Heart left ventricle (tissue), 16 donors: ENCODE measurements at regions of chr2 and their contacts with region 1.

Region 1: GRCh38 chr2:30026087-30027055 is 105.0 kb upstream of the ALK start:
- DNase-seq: peak; percentile 25 to 64 (median 40)
- ATAC-seq: peak; percentile 66 to 82 (median 80)
- H3K4me3 ChIP-seq: no peak overlapping the region
- H3K27ac ChIP-seq: no peak overlapping the region
- H3K4me1 ChIP-seq: no peaks in the 10 kb centered on the region
- H3K27me3 ChIP-seq: peaks cover 0 to 35% (median 7%) of the 10 kb centered on the region in 9 donors
- CTCF ChIP-seq: peak; percentile 32 to 71 (median 64)
- POLR2A ChIP-seq: no peak

Region 2: GRCh38 chr2:29923110-29923721 is 103.2 kb before region 1 on chr2:
- intact Hi-C with region 1: loop called (anchors 1 to 5 kb)
- DNase-seq: peak in 4 of 5 donors; percentile 32 to 62 (median 46)
- ATAC-seq: no peak
- H3K4me3 ChIP-seq: no peak overlapping the region
- H3K27ac ChIP-seq: no peak overlapping the region
- H3K4me1 ChIP-seq: peaks cover 5 to 30% (median 22%) of the 10 kb centered on the region in 12 donors
- H3K27me3 ChIP-seq: peaks cover 0 to 67% (median 24%) of the 10 kb centered on the region in 9 donors
- CTCF ChIP-seq: peak; percentile 85 to 96 (median 92)
- POLR2A ChIP-seq: no peak

Region 3: GRCh38 chr2:30136764-30137444 is 110.5 kb after region 1 on chr2:
- intact Hi-C with region 1: no loop called
- DNase-seq: no peak
- ATAC-seq: no peak
- H3K4me3 ChIP-seq: no peak overlapping the region
- H3K27ac ChIP-seq: no peak overlapping the region
- H3K4me1 ChIP-seq: peaks cover 0 to 4% (median 0%) of the 10 kb centered on the region in 12 donors
- H3K27me3 ChIP-seq: peaks cover 0 to 8% (median 0%) of the 10 kb centered on the region in 9 donors
- CTCF ChIP-seq: no peak
- POLR2A ChIP-seq: no peak

Region 4: GRCh38 chr2:30177956-30178355 is 151.6 kb after region 1 on chr2:
- intact Hi-C with region 1: no loop called
- DNase-seq: no peak
- ATAC-seq: peak in 2 of 4 donors; percentile 9 to 12
- H3K4me3 ChIP-seq: no peak overlapping the region
- H3K27ac ChIP-seq: peak overlapping the region in 6 of 12 donors; percentile 50 to 82 (median 59)
- H3K4me1 ChIP-seq: peaks cover 0 to 31% (median 15%) of the 10 kb centered on the region in 12 donors
- H3K27me3 ChIP-seq: no peaks in the 10 kb centered on the region
- CTCF ChIP-seq: no peak
- POLR2A ChIP-seq: no peak